A549 (cell line): ENCODE measurements at regions of chr7 and their contacts with region 1.

Region 1: GRCh38 chr7:131040467-131040932 is 287.2 kb upstream of the MKLN1 start:
- DNase-seq: peak; percentile 58 to 79
- ATAC-seq: peak; percentile 82 to 83
- H3K4me3 ChIP-seq: no peak overlapping the region
- H3K27ac ChIP-seq: peak overlapping the region; percentile 15 to 47; a peak in 1 of 6 replicates
- H3K4me1 ChIP-seq: peaks cover 38% of the 10 kb centered on the region
- CTCF ChIP-seq: peak; percentile 92
- EP300 ChIP-seq: no peak
- POLR2A ChIP-seq: no peak
- RAD21 ChIP-seq: peak; percentile 89 to 91

Region 2: DNA sequence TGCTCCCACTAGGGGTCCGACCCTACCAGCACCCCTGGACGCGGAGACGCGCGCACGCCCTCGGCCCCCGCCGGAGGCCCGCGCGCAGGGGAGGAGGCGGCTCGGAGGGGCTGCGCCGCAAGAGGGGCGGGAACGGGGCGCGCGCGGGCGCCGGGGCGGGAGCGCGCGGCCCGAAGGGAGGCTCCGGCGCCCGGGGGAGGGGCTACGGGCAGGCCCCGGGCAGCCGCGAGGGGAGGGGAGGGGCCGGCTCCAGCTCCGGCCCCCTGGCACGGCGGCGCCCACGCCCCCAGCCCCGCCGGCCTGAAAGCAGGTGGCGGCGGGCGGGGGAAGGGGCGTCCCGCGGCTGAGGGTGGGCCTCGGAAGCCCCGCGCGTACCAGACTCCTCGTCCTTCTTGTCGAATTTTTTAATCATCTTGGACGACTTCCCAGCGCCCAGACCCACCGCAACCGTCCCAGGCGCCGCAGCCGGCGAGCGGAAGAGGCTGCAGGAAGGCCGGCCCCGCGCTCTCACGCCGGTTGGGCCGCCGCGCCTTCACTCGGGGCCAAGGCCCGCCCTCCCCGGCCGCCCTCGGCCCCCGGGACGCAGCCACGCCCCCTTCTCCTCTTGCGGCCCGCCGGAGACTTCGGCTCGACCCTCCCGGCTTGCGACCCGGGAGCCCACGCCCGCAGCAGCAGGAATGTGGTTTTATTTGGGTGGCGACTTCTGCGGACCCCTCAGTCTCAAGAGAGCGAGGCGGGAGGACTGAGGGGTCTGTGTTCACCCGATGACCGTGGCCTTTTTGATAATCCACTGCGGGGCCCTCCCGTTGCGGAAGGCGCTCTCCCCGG is 372.0 kb before region 1 on chr7 and contains the start of gene COPG2:
- CTCF ChIA-PET with region 1: no interaction called
- POLR2A ChIA-PET with region 1: no interaction called
- DNase-seq: peak; percentile 81 to 82
- ATAC-seq: peak; percentile 98 to 99
- H3K4me3 ChIP-seq: peak within 1 kb of the TSS; percentile 64
- H3K27ac ChIP-seq: peak within 1 kb of the TSS; percentile 90 to 95
- H3K4me1 ChIP-seq: peaks cover 5% of the 10 kb centered on the region
- CTCF ChIP-seq: no peak
- EP300 ChIP-seq: no peak
- POLR2A ChIP-seq: peak; percentile 66
- RAD21 ChIP-seq: no peak
- polyA plus RNA-seq, gene COPG2: 39.5 and 42.0 TPM in 2 replicates

Region 3: GRCh38 chr7:130891254-130892094 is 149.0 kb before region 1 on chr7:
- CTCF ChIA-PET with region 1: interaction called, 71 read pairs
- POLR2A ChIA-PET with region 1: no interaction called
- DNase-seq: peak in 1 of 2 experiments; percentile 83
- ATAC-seq: peak in 1 of 2 experiments; percentile 12; a peak in 3 of 6 replicates
- H3K4me3 ChIP-seq: peak overlapping the region; percentile 16; the same call in 1 of the 3 replicates
- H3K27ac ChIP-seq: peak overlapping the region; percentile 94
- H3K4me1 ChIP-seq: peaks cover 97% of the 10 kb centered on the region
- CTCF ChIP-seq: no peak
- EP300 ChIP-seq: peak; percentile 35 to 79; a peak in 2 of 5 replicates
- POLR2A ChIP-seq: no peak
- RAD21 ChIP-seq: 0 out of 5 replicates have a peak, but pooled peaks of 1 of the 2 experiments have one; percentile 26

Region 4: DNA sequence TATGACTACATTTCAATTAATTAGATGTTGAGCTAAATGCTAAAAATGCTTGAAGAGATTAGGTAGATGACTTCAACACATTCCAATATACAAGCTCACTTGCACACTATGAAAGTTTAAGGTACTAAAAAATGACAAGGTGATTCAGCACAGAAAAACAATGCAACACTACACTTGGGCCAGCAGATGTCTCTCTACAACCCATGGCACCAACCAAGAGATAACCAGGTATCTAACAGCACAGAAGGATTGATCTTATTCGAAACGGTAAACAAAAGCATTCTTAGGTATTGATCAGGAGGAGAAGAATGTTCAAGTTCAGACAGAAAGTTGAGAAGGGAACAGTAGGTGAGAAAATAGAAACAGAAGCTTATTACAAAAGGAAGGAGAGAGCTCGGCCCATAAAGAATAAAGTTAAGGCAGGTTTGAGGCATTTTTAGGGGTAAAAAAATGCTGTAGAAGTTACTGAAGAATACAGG is 58.3 kb before region 1 on chr7:
- CTCF ChIA-PET with region 1: interaction called, 46 read pairs
- POLR2A ChIA-PET with region 1: interaction called, 4 read pairs
- DNase-seq: peak; percentile 43 to 63
- ATAC-seq: peak; percentile 83 to 85
- H3K4me3 ChIP-seq: no peak overlapping the region
- H3K27ac ChIP-seq: peak overlapping the region in 1 of 2 experiments; percentile 45; a peak in 4 of 6 replicates
- H3K4me1 ChIP-seq: peaks cover 41% of the 10 kb centered on the region
- CTCF ChIP-seq: peak; percentile 77
- EP300 ChIP-seq: no peak
- POLR2A ChIP-seq: no peak
- RAD21 ChIP-seq: peak; percentile 63 to 76

Region 5: DNA sequence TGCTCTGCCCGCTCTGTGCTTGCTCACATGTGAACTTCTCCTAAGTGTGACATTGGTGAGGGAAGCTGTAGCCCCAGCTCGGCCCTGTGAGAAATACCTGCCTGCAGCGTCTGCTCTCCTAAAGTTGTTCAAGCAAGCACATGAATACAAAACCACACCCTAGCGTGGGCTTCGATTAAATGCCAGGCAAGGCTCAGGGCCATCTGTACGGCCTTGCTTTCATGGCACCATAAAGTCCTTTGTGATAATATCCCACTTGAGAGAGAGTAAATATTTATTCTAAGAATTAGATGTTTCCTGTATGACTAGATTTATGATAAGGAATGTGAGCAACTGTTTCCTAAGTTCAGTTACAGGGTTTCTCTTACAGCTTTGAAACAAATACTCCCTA is 43.7 kb before region 1 on chr7:
- CTCF ChIA-PET with region 1: interaction called, 25 read pairs
- POLR2A ChIA-PET with region 1: no interaction called
- DNase-seq: peak in 1 of 2 experiments; percentile 69
- ATAC-seq: peak; percentile 45 to 75; a peak in 5 of 6 replicates
- H3K4me3 ChIP-seq: no peak overlapping the region
- H3K27ac ChIP-seq: peak overlapping the region; percentile 69 to 81
- H3K4me1 ChIP-seq: peaks cover 60% of the 10 kb centered on the region
- CTCF ChIP-seq: no peak
- EP300 ChIP-seq: no peak
- POLR2A ChIP-seq: no peak
- RAD21 ChIP-seq: no peak

Region 6: DNA sequence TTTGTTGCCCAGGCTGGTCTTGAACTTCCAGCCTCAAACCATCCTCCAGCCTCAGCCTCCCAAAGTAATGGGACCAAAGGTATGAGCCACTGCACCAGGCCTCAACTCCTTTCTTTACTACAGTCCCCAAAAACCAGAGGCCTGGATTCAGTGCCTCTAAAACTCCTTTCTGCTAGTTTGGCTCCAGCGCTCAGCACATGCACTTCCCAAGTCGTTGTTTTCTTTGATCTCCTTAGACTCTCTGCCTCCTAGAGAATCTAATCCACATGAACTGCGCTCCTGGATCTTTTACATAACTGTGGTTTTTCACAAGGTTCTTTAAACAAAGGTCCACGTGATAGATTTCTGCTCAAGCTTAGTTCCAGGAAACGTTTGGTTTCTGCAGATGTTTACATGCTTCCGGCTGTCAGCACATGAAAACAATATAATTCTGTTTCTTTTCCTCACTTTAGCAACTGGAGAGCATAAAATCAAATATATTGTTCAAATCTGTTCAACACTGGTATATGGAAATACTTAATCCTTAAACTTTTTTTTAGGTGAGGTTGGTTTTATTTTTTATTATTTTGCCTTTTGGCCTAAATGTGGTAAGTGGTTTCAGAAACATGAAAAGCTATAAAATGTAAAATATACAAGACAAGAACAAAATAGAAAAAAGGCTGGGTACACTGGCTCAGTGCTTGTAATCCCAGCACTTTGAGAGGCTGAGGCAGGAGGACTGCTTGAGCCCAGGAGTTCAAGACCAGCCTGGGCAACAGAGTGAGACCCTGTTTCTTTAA is 16.7 kb after region 1 on chr7:
- CTCF ChIA-PET with region 1: interaction called, 11 read pairs
- POLR2A ChIA-PET with region 1: interaction called, 3 read pairs
- DNase-seq: no peak
- ATAC-seq: no peak
- H3K4me3 ChIP-seq: no peak overlapping the region
- H3K27ac ChIP-seq: no peak overlapping the region; a peak in 1 of 6 replicates
- H3K4me1 ChIP-seq: peaks cover 37% of the 10 kb centered on the region
- CTCF ChIP-seq: no peak
- EP300 ChIP-seq: no peak
- POLR2A ChIP-seq: no peak
- RAD21 ChIP-seq: no peak

Region 7: GRCh38 chr7:131076032-131076431 is 35.5 kb after region 1 on chr7:
- CTCF ChIA-PET with region 1: no interaction called
- POLR2A ChIA-PET with region 1: no interaction called
- DNase-seq: no peak
- ATAC-seq: no peak; a peak in 1 of 6 replicates
- H3K4me3 ChIP-seq: no peak overlapping the region
- H3K27ac ChIP-seq: no peak overlapping the region
- H3K4me1 ChIP-seq: peaks cover 28% of the 10 kb centered on the region; the same call in 2 of the 3 replicates
- CTCF ChIP-seq: no peak
- EP300 ChIP-seq: no peak
- POLR2A ChIP-seq: no peak
- RAD21 ChIP-seq: no peak